Dendritic cell treated with granulocyte-macrophage colony-stimulating factor and Interleukin-4, amounts not matched to agents 40 ng/mL and 50 ng/mL, for 4 days (primary cell): ENCODE measurements at regions of chr12 and their contacts with region 1.

Region 1: DNA sequence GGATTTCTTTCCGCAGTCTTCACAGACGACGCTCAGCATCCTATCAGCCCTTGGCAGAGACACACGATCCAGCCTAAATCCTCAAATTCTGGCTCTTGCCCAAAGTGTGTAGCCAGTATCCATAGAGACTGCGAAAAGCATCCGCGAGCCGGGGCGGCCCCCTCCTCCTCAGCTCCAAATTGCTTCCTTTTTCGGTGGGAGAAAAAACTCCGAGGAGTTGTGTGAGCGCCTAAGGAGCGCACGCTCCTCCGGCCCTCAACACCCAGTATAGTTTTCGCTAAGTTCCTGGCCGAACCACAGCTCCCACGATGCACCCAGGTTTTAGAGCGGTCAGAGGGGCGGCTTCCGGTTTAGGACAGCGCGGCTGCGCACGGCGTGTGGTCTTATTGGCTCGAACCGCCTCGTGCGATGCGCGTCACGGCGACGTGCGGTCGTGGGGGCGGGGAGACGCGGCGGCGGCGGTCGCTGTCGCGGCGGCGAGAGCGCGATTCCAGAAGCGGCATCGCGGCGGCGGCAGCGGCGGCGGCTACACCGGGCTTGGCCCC is at the start of gene ADIPOR2:
- H3K4me3 Mint-ChIP-seq: peak within 1 kb of the TSS; percentile 96
- H3K27ac Mint-ChIP-seq: peak within 1 kb of the TSS; percentile 95
- H3K4me1 Mint-ChIP-seq: peaks cover 30% of the 10 kb centered on the region
- H3K27me3 Mint-ChIP-seq: no peaks in the 10 kb centered on the region

Region 2: GRCh38 chr12:1661553-1662335 is 28.9 kb before region 1 on chr12:
- intact Hi-C with region 1: loop called (anchors 2 kb)
- H3K4me3 Mint-ChIP-seq: peak overlapping the region; percentile 79
- H3K27ac Mint-ChIP-seq: peak overlapping the region; percentile 77
- H3K4me1 Mint-ChIP-seq: peaks cover 56% of the 10 kb centered on the region
- H3K27me3 Mint-ChIP-seq: no peaks in the 10 kb centered on the region

Region 3: DNA sequence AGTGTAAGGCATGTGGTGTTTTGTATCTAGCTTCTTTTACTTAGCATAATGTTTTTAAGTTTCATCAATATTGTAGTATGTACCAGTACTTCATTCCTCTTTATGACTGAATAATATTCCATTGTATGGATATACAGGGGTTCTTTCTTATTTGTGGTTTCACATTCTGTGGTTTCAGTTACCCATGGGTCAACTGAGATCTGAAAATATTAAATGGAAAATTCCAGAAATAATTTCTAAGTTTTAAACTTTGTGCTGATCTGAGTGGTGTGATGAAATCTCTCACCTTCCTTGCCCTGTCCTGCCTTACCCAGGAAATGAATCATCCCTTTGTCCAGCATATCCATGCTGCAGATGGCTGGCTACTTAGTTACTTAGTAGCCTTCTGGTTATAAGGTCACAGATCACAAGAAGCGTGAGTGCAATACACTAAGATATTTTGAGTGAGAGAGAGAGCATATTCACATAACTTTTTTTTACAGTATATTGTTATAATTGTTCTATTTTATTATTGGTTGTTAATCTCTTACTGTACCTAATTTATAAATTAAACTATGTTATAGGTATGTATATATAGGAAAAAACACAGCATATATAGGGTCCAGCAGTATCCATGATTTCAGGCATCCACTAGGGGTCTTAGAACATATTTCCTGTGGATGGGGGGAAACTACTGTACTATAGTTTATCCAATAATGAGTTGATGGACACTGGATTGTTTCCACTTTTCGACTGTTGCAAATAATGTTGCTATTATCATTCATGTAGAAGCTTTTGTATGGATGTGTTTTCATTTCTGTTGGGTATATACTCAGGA is 70.1 kb after region 1 on chr12:
- intact Hi-C with region 1: no loop called
- H3K4me3 Mint-ChIP-seq: no peak overlapping the region
- H3K27ac Mint-ChIP-seq: no peak overlapping the region
- H3K4me1 Mint-ChIP-seq: no peaks in the 10 kb centered on the region
- H3K27me3 Mint-ChIP-seq: no peaks in the 10 kb centered on the region